ENCODE measurements at regions of chr15 and their contacts with region 1.

Region 1: DNA sequence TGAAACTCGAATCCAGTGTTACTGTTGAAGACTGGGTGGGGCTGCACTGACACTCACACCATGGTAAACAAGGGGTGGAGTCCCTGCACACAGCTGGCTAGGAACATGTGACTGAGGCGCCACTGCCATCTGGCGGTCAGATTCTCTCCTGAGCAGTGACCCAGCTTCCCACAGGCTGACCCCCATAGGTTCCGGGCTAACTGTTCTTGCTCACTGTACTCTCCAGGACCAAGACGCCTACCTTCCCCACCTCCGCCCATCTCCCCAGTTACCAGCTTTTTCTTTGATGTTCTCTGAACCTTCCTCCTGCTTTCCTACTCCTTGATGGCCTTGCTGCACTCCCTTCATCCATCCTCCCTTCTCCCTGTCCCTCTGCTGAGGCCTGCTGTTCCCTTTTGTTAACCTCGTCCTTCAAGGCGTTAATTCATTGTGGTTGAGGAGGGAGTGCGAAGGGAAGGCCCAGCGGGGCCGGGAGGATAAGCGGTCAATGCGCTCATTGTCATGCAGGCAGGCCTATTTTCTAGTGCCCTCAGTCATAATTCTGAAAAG is 115.2 kb downstream of the ATP8B4 start:
- DNase-seq: peak; percentile 85
- H3K4me3 Mint-ChIP-seq: no peak overlapping the region
- H3K27ac Mint-ChIP-seq: peak overlapping the region; percentile 25
- H3K4me1 Mint-ChIP-seq: no peaks in the 10 kb centered on the region
- H3K27me3 Mint-ChIP-seq: no peaks in the 10 kb centered on the region
- CTCF ChIP-seq: peak; percentile 67

Region 2: GRCh38 chr15:49235446-49236124 is 768.3 kb before region 1 on chr15:
- CTCF ChIA-PET with region 1: interaction called, 16 read pairs
- POLR2A ChIA-PET with region 1: no interaction called
- intact Hi-C with region 1: loop called (anchors 1 kb)
- DNase-seq: peak; percentile 69
- H3K4me3 Mint-ChIP-seq: no peak overlapping the region
- H3K27ac Mint-ChIP-seq: peak overlapping the region; percentile 35
- H3K4me1 Mint-ChIP-seq: peaks cover 9% of the 10 kb centered on the region
- H3K27me3 Mint-ChIP-seq: no peaks in the 10 kb centered on the region
- CTCF ChIP-seq: peak; percentile 74

Region 3: GRCh38 chr15:49370782-49371181 is 633.1 kb before region 1 on chr15:
- CTCF ChIA-PET with region 1: no interaction called
- POLR2A ChIA-PET with region 1: no interaction called
- intact Hi-C with region 1: loop called (anchors 5 kb)
- DNase-seq: peak; percentile 30
- H3K4me3 Mint-ChIP-seq: no peak overlapping the region
- H3K27ac Mint-ChIP-seq: no peak overlapping the region
- H3K4me1 Mint-ChIP-seq: no peaks in the 10 kb centered on the region
- H3K27me3 Mint-ChIP-seq: no peaks in the 10 kb centered on the region
- CTCF ChIP-seq: peak; percentile 29

Region 4: DNA sequence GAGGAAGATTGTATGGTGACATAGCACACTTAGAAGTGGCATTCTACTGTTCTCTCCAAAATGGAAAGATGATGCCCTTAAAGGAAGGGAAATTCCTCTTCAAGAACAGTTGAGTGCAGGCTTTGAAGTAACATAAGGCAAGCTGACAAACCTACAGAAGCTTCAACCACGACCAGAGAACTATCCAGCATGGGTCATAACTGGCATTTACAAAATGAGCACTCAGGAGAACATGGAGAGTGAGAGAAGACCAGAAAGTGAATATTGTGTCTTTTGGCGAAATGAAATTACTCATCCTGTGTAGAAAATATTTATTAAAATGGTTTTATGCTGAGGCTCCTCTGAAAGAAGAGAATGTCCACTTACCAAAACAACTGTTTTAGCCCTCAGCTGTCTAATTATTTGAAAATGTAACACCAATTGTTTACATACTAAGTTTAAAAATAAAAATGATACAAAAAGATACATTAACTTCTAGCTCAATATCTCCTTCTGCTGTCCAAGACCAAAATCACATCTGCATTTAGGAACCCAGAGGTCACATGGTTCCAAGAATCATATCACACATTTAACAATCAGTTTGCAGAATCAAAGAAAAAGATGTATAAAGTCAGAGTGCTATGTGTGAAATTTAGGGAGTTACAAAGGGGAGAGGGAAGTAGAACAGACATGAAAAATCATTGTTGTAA is 101.7 kb before region 1 on chr15:
- CTCF ChIA-PET with region 1: interaction called, 3 read pairs
- POLR2A ChIA-PET with region 1: no interaction called
- intact Hi-C with region 1: loop called (anchors 10 kb)
- DNase-seq: peak; percentile 43
- H3K4me3 Mint-ChIP-seq: no peak overlapping the region
- H3K27ac Mint-ChIP-seq: peak overlapping the region; percentile 14
- H3K4me1 Mint-ChIP-seq: peaks cover 10% of the 10 kb centered on the region
- H3K27me3 Mint-ChIP-seq: no peaks in the 10 kb centered on the region
- CTCF ChIP-seq: peak; percentile 52

Region 5: GRCh38 chr15:49982584-49982983 is 21.3 kb before region 1 on chr15:
- CTCF ChIA-PET with region 1: interaction called, 10 read pairs
- POLR2A ChIA-PET with region 1: no interaction called
- intact Hi-C with region 1: no loop called
- DNase-seq: no peak
- H3K4me3 Mint-ChIP-seq: no peak overlapping the region
- H3K27ac Mint-ChIP-seq: no peak overlapping the region
- H3K4me1 Mint-ChIP-seq: no peaks in the 10 kb centered on the region
- H3K27me3 Mint-ChIP-seq: no peaks in the 10 kb centered on the region
- CTCF ChIP-seq: no peak

Region 6: DNA sequence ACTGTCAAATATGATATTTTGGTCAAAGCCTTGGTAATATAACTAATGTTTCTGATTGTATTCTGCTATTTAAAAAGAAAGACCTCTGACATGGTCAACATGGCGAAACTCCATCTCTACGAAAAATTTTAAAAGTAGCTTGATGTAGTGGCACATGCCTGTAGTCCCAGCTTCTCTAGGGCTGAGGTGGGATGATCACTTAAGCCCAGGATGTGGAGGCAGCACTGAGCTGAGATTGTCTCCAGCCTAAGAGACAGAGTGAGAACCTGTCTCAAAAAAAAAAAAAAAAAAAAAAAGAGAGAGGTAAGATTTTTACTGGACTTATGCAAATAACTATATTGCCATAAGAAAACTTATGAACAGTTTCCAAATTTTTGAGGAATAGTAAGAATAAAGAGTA is 147.6 kb after region 1 on chr15:
- CTCF ChIA-PET with region 1: no interaction called
- POLR2A ChIA-PET with region 1: no interaction called
- intact Hi-C with region 1: no loop called
- DNase-seq: no peak
- H3K4me3 Mint-ChIP-seq: no peak overlapping the region
- H3K27ac Mint-ChIP-seq: no peak overlapping the region
- H3K4me1 Mint-ChIP-seq: no peaks in the 10 kb centered on the region
- H3K27me3 Mint-ChIP-seq: no peaks in the 10 kb centered on the region
- CTCF ChIP-seq: no peak